ENCODE measurements at regions of chr19 and their contacts with region 1.

Region 1: GRCh38 chr19:10388957-10389356 is 8.6 kb upstream of the TYK2 start:
- DNase-seq: peak; percentile 88
- H3K4me3 ChIP-seq: no peak overlapping the region
- H3K27ac ChIP-seq: peak overlapping the region; percentile 12
- H3K4me1 ChIP-seq: peaks cover 12% of the 10 kb centered on the region
- H3K27me3 ChIP-seq: no peaks in the 10 kb centered on the region
- CTCF ChIP-seq: peak; percentile 93

Region 2: GRCh38 chr19:10259162-10259905 is 129.6 kb before region 1 on chr19:
- intact Hi-C with region 1: loop called (anchors 5 kb)
- DNase-seq: peak; percentile 81
- H3K4me3 ChIP-seq: no peak overlapping the region
- H3K27ac ChIP-seq: peak overlapping the region; percentile 51
- H3K4me1 ChIP-seq: peaks cover 19% of the 10 kb centered on the region
- H3K27me3 ChIP-seq: no peaks in the 10 kb centered on the region
- CTCF ChIP-seq: peak; percentile 81

Region 3: GRCh38 chr19:10269333-10270179 is 119.4 kb before region 1 on chr19:
- intact Hi-C with region 1: loop called (anchors 5 kb)
- DNase-seq: peak; percentile 90
- H3K4me3 ChIP-seq: peak overlapping the region; percentile 71
- H3K27ac ChIP-seq: peak overlapping the region; percentile 93
- H3K4me1 ChIP-seq: peaks cover 50% of the 10 kb centered on the region
- H3K27me3 ChIP-seq: peaks cover 21% of the 10 kb centered on the region
- CTCF ChIP-seq: peak; percentile 98

Region 4: DNA sequence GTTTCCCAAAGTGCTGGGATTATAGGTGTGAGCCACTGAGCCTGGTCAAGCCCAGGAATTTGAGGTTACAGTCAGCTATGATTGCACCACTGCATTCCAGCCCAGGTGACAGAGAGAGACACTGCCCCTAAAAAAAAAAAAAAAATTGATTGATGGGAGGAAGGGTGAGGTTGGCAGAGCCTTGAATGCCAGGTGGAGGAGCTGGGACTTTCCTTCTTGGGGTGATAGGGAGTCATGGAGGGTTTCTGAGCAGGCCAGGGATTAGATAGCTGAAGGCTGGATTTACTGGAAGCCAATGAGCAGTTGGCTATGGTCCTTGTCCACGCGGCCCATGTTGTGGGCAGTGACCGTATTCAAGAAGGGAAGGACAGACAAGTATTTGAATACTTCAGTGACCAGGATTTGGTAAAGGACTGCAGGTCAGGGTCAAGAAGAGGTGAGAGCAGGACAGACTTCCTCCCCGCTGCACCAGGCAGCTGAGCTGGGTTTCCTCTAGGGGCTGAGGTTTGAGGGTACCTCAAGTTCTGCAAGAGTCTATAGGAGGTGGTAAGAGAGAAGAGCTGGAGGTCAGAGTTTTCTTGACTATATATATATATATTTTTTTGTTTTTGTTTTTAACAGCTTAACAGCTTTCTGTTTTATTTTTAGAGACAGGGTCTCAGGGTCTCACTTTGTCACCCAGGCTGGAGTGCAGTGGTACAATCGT is 109.1 kb before region 1 on chr19:
- intact Hi-C with region 1: loop called (anchors 5 kb)
- DNase-seq: no peak
- H3K4me3 ChIP-seq: no peak overlapping the region
- H3K27ac ChIP-seq: no peak overlapping the region
- H3K4me1 ChIP-seq: peaks cover 1% of the 10 kb centered on the region
- H3K27me3 ChIP-seq: no peaks in the 10 kb centered on the region
- CTCF ChIP-seq: no peak